ENCODE measurements at regions of chr13 and their contacts with region 1.

Region 1: DNA sequence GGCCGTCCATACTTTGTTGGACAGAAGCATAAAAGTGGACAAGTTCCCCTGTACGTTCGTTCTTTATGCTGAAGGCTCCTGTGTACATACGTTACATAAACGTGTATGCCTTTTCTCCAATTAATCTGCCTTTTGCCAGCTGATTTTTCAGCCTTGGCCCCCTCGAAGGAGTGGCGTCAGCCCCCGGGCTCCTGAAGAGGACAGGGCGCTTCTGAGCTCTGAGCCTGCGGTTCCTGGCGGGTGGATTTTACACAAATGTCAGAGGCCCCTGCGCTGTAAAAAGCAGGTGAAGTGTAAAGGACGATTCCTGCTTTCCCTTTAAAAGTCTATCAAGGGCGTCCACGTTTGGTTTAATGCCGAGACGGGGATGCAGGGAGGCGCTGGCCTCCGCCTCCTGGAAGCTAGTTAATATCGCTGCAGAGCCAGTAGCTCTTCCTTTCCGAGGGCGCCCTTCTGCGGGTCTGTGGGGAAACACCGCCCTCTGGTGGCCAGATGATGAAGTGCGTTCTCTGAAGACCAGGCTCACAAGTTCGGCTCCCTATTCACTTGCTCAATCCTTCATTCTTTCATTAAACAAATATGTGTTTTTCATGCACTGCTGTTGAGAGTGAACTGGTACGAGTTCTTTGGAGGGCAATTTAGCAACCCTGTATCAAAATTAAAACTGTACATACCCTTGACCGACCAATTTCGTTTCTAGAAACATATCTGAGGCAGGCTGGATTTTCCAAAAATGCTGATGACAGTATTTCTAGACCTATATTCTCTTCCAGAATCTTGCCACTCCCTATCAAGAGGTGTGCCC is 62.0 kb downstream of the GPR12 start:
- DNase-seq: peak; percentile 86
- H3K4me3 ChIP-seq: no peak overlapping the region
- H3K27ac ChIP-seq: no peak overlapping the region
- H3K4me1 ChIP-seq: no peaks in the 10 kb centered on the region
- H3K27me3 ChIP-seq: no peaks in the 10 kb centered on the region
- CTCF ChIP-seq: peak; percentile 95

Region 2: DNA sequence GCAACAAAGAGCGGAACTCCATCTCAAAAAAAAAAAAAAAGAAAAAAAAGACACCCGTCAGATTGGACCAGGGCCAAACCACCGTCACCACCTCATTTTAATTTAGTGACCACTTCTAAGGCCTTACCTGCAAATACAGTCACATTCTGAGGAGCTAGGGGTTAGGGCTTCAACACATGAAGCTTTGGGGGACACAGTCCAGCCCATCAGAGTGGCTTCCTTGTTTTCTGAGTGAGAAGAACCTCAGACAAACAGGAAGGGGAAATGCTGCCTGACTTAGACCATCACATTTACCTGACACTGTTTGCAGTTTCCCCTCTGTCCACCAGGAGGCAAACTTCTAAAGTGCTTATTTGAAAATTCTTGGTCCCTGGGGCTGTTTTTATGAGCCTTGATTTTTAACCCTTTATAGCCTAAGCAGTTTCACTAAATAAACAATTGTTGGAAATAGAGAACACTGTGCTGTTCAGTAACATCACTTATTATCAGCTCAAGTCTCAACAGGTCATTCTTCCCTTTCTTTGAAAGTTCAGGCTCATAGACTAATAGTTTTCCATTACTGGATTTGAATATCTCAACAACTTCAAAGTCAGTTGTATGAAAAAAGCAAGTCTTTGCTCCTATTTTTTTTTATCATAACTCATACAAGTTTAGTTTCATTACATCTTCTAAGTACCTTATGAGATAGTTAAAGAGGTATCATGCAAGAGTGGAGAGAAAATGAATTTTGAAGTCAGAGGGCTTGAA is 216.0 kb before region 1 on chr13:
- CTCF ChIA-PET with region 1: interaction called, 3 read pairs
- POLR2A ChIA-PET with region 1: no interaction called
- intact Hi-C with region 1: loop called (anchors 1 kb)
- DNase-seq: peak; percentile 83
- H3K4me3 ChIP-seq: no peak overlapping the region
- H3K27ac ChIP-seq: no peak overlapping the region
- H3K4me1 ChIP-seq: no peaks in the 10 kb centered on the region
- H3K27me3 ChIP-seq: no peaks in the 10 kb centered on the region
- CTCF ChIP-seq: peak; percentile 88

Region 3: GRCh38 chr13:26498656-26499591 is 199.7 kb before region 1 on chr13:
- CTCF ChIA-PET with region 1: interaction called, 13 read pairs
- POLR2A ChIA-PET with region 1: no interaction called
- intact Hi-C with region 1: no loop called
- DNase-seq: peak; percentile 42
- H3K4me3 ChIP-seq: no peak overlapping the region
- H3K27ac ChIP-seq: peak overlapping the region; percentile 79
- H3K4me1 ChIP-seq: peaks cover 32% of the 10 kb centered on the region
- H3K27me3 ChIP-seq: no peaks in the 10 kb centered on the region
- CTCF ChIP-seq: no peak

Region 4: GRCh38 chr13:26688286-26688685 is 10.3 kb before region 1 on chr13:
- CTCF ChIA-PET with region 1: interaction called, 11 read pairs
- POLR2A ChIA-PET with region 1: no interaction called
- intact Hi-C with region 1: no loop called
- DNase-seq: peak; percentile 36
- H3K4me3 ChIP-seq: peak overlapping the region; percentile 11
- H3K27ac ChIP-seq: no peak overlapping the region
- H3K4me1 ChIP-seq: no peaks in the 10 kb centered on the region
- H3K27me3 ChIP-seq: no peaks in the 10 kb centered on the region
- CTCF ChIP-seq: no peak

Region 5: GRCh38 chr13:26929971-26930730 is 231.6 kb after region 1 on chr13:
- CTCF ChIA-PET with region 1: interaction called, 11 read pairs
- POLR2A ChIA-PET with region 1: no interaction called
- intact Hi-C with region 1: no loop called
- DNase-seq: peak; percentile 83
- H3K4me3 ChIP-seq: no peak overlapping the region
- H3K27ac ChIP-seq: no peak overlapping the region
- H3K4me1 ChIP-seq: no peaks in the 10 kb centered on the region
- H3K27me3 ChIP-seq: peaks cover 27% of the 10 kb centered on the region
- CTCF ChIP-seq: peak; percentile 94